ENCODE measurements at regions of chr22 and their contacts with region 1.

Region 1: DNA sequence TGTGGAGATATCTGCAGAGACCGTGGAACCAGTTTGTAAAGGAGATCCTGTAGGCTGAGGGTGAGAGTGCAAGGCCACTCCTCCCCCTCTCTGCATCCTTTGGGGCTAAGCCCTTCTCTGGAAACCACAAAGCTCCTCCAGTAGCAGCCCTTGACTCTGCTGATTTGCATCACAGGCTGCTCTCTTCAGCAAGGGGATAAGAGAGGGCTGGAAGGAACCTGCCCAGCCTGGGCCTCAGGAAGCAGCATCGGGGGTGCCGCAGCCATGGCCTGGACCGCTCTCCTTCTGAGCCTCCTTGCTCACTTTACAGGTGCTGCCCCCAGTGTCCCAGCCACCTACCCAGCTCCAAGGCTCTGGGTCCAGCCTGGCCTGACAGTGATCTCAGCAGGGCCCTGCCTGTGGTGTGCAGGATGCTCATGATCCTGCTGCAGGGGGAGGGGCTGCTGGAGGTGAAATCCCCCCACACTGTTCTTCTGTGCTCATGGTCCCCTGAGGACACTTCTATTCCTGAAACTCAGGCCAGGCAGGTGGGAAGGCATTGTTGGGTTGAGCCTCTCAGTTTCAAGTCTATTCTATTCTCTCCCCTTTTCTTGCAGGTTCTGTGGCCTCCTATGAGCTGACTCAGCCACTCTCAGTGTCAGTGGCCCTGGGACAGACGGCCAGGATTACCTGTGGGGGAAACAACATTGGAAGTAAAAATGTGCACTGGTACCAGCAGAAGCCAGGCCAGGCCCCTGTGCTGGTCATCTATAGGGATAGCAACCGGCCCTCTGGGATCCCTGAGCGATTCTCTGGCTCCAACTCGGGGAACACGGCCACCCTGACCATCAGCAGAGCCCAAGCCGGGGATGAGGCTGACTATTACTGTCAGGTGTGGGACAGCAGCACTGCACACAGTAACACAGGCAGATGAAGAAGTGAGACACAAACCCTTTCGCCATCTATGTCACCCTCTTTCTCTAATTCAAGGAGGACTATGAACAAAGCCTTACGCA is 68.5 kb upstream of the IGLL5 start:
- DNase-seq: peak in 5 of 9 donors; percentile 38 to 52 (median 43)
- ATAC-seq: peak; percentile 59
- H3K4me3 ChIP-seq: peak overlapping the region; percentile 50
- H3K4me3 Mint-ChIP-seq: peak overlapping the region; percentile 55 to 88 (median 80)
- H3K27ac ChIP-seq: peak overlapping the region; percentile 66
- H3K27ac Mint-ChIP-seq: peak overlapping the region; percentile 84 to 99 (median 91)
- H3K4me1 ChIP-seq: peaks cover 90 to 92% of the 10 kb centered on the region in 2 donors
- H3K4me1 Mint-ChIP-seq: peaks cover 87 to 99% (median 99%) of the 10 kb centered on the region in 7 donors
- H3K27me3 ChIP-seq: no peaks in the 10 kb centered on the region
- H3K27me3 Mint-ChIP-seq: peaks cover 0 to 2% (median 0%) of the 10 kb centered on the region in 5 donors

Region 2: DNA sequence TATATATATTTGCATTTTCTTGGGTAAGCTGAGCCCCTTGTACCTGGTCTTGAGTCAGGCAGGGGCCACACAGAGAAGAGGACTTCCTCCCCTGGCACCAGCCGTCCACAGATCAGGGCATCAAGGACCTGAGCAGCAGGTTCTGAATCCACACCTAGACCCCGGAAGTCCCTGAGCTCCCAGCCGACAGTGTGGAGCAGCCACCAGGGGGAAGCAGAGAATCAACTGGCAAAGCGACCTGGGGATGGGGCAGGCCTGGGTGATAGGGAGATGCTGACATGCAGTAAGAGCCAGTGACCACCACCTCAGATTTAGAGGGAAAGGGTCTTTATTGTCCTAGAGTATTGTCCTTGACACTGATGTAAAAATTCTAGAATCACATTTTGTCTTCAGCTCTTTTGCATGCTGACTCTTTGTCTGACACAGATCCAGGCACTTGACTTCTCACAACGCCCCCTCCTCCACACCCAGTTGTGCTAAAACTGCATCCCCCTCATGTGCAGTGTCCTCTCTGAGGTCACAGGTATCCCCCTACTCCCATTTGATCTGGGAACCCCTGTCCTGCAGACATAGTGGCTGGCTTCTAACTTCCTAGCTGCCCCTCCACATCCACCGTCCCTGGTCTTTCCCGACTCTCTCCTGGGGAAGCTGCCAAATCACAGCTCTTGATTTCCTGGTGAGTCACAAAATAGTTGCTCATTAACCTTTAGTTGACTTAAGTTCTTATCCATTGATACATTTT is 65.5 kb before region 1 on chr22:
- CTCF ChIA-PET with region 1: interaction called, 11 read pairs
- POLR2A ChIA-PET with region 1: interaction called, 28 read pairs
- intact Hi-C with region 1: no loop called
- DNase-seq: peak; percentile 52 to 78 (median 74)
- ATAC-seq: peak; percentile 92
- H3K4me3 ChIP-seq: peak overlapping the region; percentile 29
- H3K4me3 Mint-ChIP-seq: peak overlapping the region in 8 of 10 donors; percentile 57 to 72 (median 68)
- H3K27ac ChIP-seq: peak overlapping the region; percentile 57
- H3K27ac Mint-ChIP-seq: peak overlapping the region in 8 of 9 donors; percentile 88 to 96 (median 95)
- H3K4me1 ChIP-seq: peaks cover 11 to 57% of the 10 kb centered on the region in 2 donors
- H3K4me1 Mint-ChIP-seq: peaks cover 4 to 48% (median 44%) of the 10 kb centered on the region in 7 donors
- H3K27me3 ChIP-seq: no peaks in the 10 kb centered on the region
- H3K27me3 Mint-ChIP-seq: peaks cover 0 to 3% (median 0%) of the 10 kb centered on the region in 5 donors

Region 3: GRCh38 chr22:22848364-22848866 is 29.3 kb after region 1 on chr22:
- CTCF ChIA-PET with region 1: interaction called, 247 read pairs
- POLR2A ChIA-PET with region 1: interaction called, 96 read pairs
- intact Hi-C with region 1: loop called in 1 of 2 experiments (anchors 1 kb)
- DNase-seq: peak; percentile 35 to 75 (median 52)
- ATAC-seq: peak; percentile 83
- H3K4me3 ChIP-seq: no peak overlapping the region
- H3K4me3 Mint-ChIP-seq: no peak overlapping the region
- H3K27ac ChIP-seq: no peak overlapping the region
- H3K27ac Mint-ChIP-seq: peak overlapping the region in 3 of 9 donors; percentile 22 to 79 (median 52)
- H3K4me1 ChIP-seq: peaks cover 26 to 30% of the 10 kb centered on the region in 2 donors
- H3K4me1 Mint-ChIP-seq: peaks cover 8 to 57% (median 48%) of the 10 kb centered on the region in 7 donors
- H3K27me3 ChIP-seq: no peaks in the 10 kb centered on the region
- H3K27me3 Mint-ChIP-seq: peaks cover 0 to 59% (median 0%) of the 10 kb centered on the region in 5 donors

Region 4: DNA sequence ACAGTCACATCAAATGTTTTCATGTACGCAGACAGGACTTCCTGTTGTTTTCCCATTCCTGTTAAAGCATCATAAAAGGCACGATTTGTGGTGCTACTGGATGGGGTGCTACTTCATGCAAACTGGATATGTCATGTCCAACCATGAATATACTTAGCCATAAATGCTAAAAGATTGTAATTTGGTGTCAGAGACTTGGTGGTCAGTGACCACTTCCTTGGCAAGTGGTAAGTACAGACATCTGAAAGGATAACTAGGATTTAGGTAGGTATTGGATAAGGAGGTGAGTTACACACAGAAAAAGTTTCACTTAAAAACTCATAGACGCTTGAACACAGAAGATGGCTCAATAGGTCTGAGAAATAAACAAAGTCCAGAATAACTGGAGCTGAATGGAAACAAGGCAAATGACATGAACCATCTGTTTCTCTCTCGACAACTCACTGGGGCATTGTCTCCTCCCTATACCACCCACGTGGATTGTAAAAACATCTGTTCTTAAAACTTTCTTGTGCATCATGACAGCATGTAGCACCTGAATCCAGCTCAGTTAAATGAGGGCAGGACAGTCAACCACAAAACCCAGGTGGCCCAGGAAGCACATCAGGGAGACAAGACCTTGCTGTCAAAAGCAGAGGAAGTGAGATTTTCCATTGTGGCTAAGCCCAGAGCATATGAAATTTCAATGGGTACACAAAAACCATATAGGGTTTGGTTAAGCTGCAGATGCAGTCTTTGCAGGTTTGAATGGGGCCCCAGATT is 46.3 kb after region 1 on chr22:
- CTCF ChIA-PET with region 1: no interaction called
- POLR2A ChIA-PET with region 1: interaction called, 7 read pairs
- intact Hi-C with region 1: loop called in 1 of 2 experiments (anchors 5 kb)
- DNase-seq: peak in 8 of 9 donors; percentile 24 to 56 (median 40)
- ATAC-seq: peak; percentile 63
- H3K4me3 ChIP-seq: no peak overlapping the region
- H3K4me3 Mint-ChIP-seq: peak overlapping the region in 9 of 10 donors; percentile 4 to 61 (median 41)
- H3K27ac ChIP-seq: no peak overlapping the region
- H3K27ac Mint-ChIP-seq: peak overlapping the region in 8 of 9 donors; percentile 67 to 90 (median 80)
- H3K4me1 ChIP-seq: peaks cover 32% of the 10 kb centered on the region in 2 donors
- H3K4me1 Mint-ChIP-seq: peaks cover 28 to 52% (median 42%) of the 10 kb centered on the region in 7 donors
- H3K27me3 ChIP-seq: no peaks in the 10 kb centered on the region
- H3K27me3 Mint-ChIP-seq: peaks cover 0 to 57% (median 0%) of the 10 kb centered on the region in 5 donors

Region 5: GRCh38 chr22:22893077-22893805 is 74.1 kb after region 1 on chr22:
- CTCF ChIA-PET with region 1: no interaction called
- POLR2A ChIA-PET with region 1: no interaction called
- intact Hi-C with region 1: no loop called
- DNase-seq: no peak
- ATAC-seq: no peak
- H3K4me3 ChIP-seq: no peak overlapping the region
- H3K4me3 Mint-ChIP-seq: no peak overlapping the region
- H3K27ac ChIP-seq: no peak overlapping the region
- H3K27ac Mint-ChIP-seq: no peak overlapping the region
- H3K4me1 ChIP-seq: no peaks in the 10 kb centered on the region
- H3K4me1 Mint-ChIP-seq: peaks cover 0 to 3% (median 0%) of the 10 kb centered on the region in 7 donors
- H3K27me3 ChIP-seq: no peaks in the 10 kb centered on the region
- H3K27me3 Mint-ChIP-seq: peaks cover 4 to 49% (median 19%) of the 10 kb centered on the region in 5 donors

Region 6: GRCh38 chr22:22981670-22982571 is 162.8 kb after region 1 on chr22:
- CTCF ChIA-PET with region 1: no interaction called
- POLR2A ChIA-PET with region 1: no interaction called
- intact Hi-C with region 1: no loop called
- DNase-seq: no peak
- ATAC-seq: no peak
- H3K4me3 ChIP-seq: no peak overlapping the region
- H3K4me3 Mint-ChIP-seq: no peak overlapping the region
- H3K27ac ChIP-seq: no peak overlapping the region
- H3K27ac Mint-ChIP-seq: no peak overlapping the region
- H3K4me1 ChIP-seq: peaks cover 0 to 9% of the 10 kb centered on the region in 2 donors
- H3K4me1 Mint-ChIP-seq: peaks cover 0 to 9% (median 6%) of the 10 kb centered on the region in 7 donors
- H3K27me3 ChIP-seq: no peaks in the 10 kb centered on the region
- H3K27me3 Mint-ChIP-seq: peaks cover 0 to 26% (median 4%) of the 10 kb centered on the region in 5 donors

Region 7: GRCh38 chr22:23240639-23241389 is 421.7 kb after region 1 on chr22:
- CTCF ChIA-PET with region 1: no interaction called
- POLR2A ChIA-PET with region 1: no interaction called
- intact Hi-C with region 1: loop called in 1 of 2 experiments (anchors 10 kb)
- DNase-seq: peak in 1 of 9 donors; percentile 46
- ATAC-seq: peak; percentile 10
- H3K4me3 ChIP-seq: no peak overlapping the region
- H3K4me3 Mint-ChIP-seq: peak overlapping the region in 9 of 10 donors; percentile 29 to 84 (median 32)
- H3K27ac ChIP-seq: peak overlapping the region; percentile 84
- H3K27ac Mint-ChIP-seq: peak overlapping the region; percentile 74 to 96 (median 88)
- H3K4me1 ChIP-seq: peaks cover 51 to 76% of the 10 kb centered on the region in 2 donors
- H3K4me1 Mint-ChIP-seq: peaks cover 60 to 98% (median 87%) of the 10 kb centered on the region in 7 donors
- H3K27me3 ChIP-seq: no peaks in the 10 kb centered on the region
- H3K27me3 Mint-ChIP-seq: no peaks in the 10 kb centered on the region

Measured in naive thymus-derived CD4-positive, alpha-beta T cell (primary cell).